BJ (cell line): ENCODE measurements at regions of chr3 and their contacts with region 1.

Region 1: GRCh38 chr3:170414202-170414663 is 4.4 kb upstream of the CLDN11 start:
- DNase-seq: peak; percentile 95
- H3K4me3 ChIP-seq: no peak overlapping the region
- H3K27me3 ChIP-seq: no peaks in the 10 kb centered on the region
- CTCF ChIP-seq: peak; percentile 97

Region 2: DNA sequence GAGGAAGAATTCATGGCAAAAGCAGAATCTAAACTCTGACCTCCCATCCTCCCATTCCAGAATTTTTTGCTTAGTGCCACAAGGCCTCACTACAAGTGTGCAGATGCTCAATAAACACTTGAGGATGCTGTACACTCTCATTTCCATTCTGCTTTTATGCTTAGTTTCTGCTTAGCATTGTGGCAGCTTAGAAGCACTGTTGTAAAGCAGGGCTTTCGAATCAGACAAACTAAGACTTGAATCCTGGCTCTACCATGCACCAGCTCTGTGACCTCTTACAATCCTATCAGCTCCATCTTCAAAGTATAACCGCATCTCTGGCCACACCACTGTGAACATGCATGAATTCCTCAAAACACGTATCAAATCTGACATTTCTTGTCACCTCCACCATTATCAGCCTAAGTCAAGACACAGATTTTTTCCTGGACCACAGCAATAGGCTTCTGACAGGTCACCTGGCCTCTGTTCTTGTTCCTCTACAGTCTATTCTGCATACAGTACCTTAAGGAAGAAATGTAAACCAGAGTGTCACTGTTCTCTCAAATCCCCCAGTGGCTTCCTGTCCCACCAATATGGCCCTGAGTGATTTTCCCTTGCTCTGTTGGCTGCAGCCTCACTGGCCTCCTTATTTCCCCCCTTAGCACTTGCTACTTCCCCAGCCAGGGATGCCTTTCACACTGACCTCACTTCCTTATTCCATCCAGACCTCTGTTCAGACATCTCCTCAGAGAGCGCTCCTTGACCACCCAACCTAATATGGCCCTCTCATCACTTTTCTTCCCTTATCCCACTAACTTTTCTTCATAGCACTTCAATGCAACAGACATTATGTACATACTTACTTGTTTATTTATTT is 224.6 kb before region 1 on chr3:
- CTCF ChIA-PET with region 1: interaction called, 12 read pairs
- POLR2A ChIA-PET with region 1: no interaction called
- DNase-seq: no peak
- H3K4me3 ChIP-seq: no peak overlapping the region
- H3K27me3 ChIP-seq: no peaks in the 10 kb centered on the region; the same call in 1 of the 2 replicates
- CTCF ChIP-seq: no peak

Region 3: DNA sequence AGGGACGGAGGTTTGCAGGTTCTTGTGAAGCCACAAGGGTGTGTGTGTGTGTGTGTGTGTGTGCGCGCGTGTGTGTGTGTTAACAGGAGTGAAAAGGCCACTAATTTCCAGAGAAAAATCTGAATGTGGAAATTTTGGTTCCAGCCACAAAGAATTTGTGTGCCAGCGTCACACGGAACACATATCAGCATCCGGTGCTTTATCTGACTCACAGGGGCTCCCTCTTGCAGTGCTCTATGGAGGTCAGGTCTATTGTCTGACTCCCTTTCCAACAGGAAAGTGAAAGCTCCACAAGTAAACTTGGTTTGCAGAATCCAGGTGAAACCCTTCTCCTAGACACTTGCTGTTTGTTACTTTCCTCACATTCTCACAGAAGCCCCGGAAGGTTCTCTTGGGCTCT is 10.6 kb after region 1 on chr3:
- CTCF ChIA-PET with region 1: no interaction called
- POLR2A ChIA-PET with region 1: no interaction called
- DNase-seq: no peak
- H3K4me3 ChIP-seq: no peak overlapping the region
- H3K27me3 ChIP-seq: no peaks in the 10 kb centered on the region
- CTCF ChIP-seq: no peak

Region 4: DNA sequence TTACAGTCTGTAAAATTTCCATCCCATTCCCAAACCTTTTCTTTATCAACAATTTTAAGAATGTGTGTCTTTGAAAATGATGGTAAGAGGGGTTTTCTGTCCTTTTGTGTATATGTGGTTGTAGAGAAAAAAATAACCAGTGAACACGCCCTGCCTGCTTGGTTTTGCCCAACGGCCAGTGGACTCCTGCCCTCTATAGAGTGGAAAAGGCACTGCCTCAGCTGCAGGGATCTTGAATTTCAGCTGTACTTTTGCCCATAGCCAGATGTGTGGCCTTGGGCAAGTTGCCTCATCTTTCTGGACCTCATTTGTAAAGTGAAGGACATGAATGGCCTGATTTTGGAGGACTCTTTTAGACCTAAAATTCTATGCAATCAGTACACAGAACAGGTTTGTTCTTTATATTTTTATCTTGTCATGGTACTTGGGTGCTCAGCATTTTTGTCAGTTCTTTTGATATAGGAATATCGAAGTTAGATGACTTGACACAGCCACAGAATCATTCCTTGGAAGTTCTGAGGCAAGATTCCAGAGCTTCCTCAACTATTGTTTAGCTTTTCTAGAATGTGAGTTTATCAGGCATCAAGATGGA is 85.4 kb after region 1 on chr3:
- CTCF ChIA-PET with region 1: interaction called, 11 read pairs
- POLR2A ChIA-PET with region 1: no interaction called
- DNase-seq: no peak
- H3K4me3 ChIP-seq: no peak overlapping the region
- H3K27me3 ChIP-seq: no peaks in the 10 kb centered on the region
- CTCF ChIP-seq: peak; percentile 75

Region 5: DNA sequence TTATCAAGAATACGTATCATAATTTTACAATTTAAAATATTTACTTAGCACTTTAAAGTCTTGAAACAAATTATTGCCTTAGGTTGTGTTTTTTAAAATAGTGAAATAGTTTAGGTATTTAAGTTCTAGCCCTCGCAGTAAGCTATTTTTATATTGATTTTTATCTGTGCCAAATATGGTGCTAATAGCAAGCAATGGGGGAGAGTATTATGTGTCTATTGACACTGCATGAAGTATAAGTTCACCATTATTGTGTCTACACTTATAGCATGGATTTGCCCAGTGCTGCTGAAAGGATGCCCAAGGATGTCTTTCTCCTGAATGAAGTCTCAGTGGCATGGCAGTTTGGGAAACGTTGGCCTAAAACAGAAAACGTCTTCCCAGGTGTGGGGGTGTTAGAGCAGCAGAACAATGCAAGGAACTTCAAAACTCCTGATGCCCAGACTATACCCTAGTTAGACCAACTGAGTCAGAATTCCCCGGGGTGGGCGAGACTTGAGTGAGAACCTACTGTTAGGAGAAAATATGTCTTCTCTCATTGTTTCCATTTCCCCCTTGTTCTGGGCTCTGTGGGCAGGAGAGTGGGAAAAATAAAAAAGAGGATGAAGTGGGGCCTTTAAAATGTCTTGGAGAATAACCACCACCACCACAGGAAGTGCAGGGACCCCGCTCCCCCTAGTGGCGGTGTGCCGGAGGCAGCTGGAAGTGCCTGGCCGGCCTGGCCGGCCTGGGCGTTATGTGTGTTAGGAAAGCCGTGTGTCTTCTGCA is 275.8 kb after region 1 on chr3:
- CTCF ChIA-PET with region 1: interaction called, 3 read pairs
- POLR2A ChIA-PET with region 1: interaction called, 21 read pairs
- DNase-seq: no peak
- H3K4me3 ChIP-seq: no peak overlapping the region
- H3K27me3 ChIP-seq: no peaks in the 10 kb centered on the region
- CTCF ChIP-seq: peak; percentile 61

Region 6: DNA sequence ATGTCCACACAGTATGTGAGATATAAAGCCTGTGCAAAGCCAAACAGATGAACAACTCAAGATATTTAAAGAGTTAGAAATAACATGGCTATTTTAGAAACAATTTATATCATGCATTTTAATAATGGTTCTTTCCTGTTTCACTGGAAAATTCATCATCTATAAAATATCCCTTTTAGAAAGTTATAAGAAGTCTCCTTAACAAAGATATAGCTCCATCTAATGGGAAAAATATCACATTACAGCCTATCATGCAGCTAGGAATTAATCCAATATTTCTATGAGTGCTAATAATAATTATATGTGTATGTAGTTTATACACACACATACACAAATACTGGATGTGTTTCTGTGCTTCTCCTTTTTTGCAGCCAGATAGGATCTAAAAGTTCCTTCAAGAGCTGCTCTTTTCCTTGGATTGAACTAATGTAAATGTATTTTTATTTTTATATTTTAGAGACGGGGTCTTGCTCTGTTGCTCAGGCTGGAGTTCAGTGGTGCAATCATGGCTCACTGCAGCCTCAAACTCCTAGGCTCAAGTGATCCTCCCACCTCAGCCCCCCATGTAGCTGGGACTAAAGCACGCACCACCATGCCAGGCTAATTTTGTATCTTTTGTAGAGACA is 434.2 kb after region 1 on chr3:
- CTCF ChIA-PET with region 1: interaction called, 33 read pairs
- POLR2A ChIA-PET with region 1: no interaction called
- DNase-seq: no peak
- H3K4me3 ChIP-seq: no peak overlapping the region
- H3K27me3 ChIP-seq: no peaks in the 10 kb centered on the region
- CTCF ChIP-seq: peak; percentile 22; the same call in 1 of the 2 replicates